ENCODE measurements at regions of chr9 and their contacts with region 1.

Region 1: GRCh38 chr9:26326473-26327044 is 566.0 kb downstream of the CAAP1 start:
- DNase-seq: peak; percentile 81
- ATAC-seq: peak; percentile 81
- H3K4me3 ChIP-seq: no peak overlapping the region
- H3K27ac ChIP-seq: no peak overlapping the region
- H3K4me1 ChIP-seq: peaks cover 2% of the 10 kb centered on the region; the same call in 1 of the 2 replicates
- H3K27me3 ChIP-seq: no peaks in the 10 kb centered on the region
- CTCF ChIP-seq: peak; percentile 89
- POLR2A ChIP-seq: peak; percentile 48; the same call in 1 of the 2 replicates
- RAD21 ChIP-seq: peak; percentile 95

Region 2: GRCh38 chr9:25613704-25614103 is 712.9 kb before region 1 on chr9:
- CTCF ChIA-PET with region 1: no interaction called
- POLR2A ChIA-PET with region 1: no interaction called
- dilution Hi-C with region 1: no loop called
- in situ Hi-C with region 1: no loop called
- intact Hi-C with region 1: no loop called
- DNase-seq: no peak
- ATAC-seq: no peak
- H3K4me3 ChIP-seq: no peak overlapping the region
- H3K27ac ChIP-seq: no peak overlapping the region
- H3K4me1 ChIP-seq: no peaks in the 10 kb centered on the region
- H3K27me3 ChIP-seq: no peaks in the 10 kb centered on the region
- CTCF ChIP-seq: no peak
- POLR2A ChIP-seq: no peak
- RAD21 ChIP-seq: no peak

Region 3: GRCh38 chr9:25954209-25954608 is 372.4 kb before region 1 on chr9:
- CTCF ChIA-PET with region 1: interaction called, 3 read pairs
- POLR2A ChIA-PET with region 1: no interaction called
- dilution Hi-C with region 1: no loop called
- in situ Hi-C with region 1: loop called (anchors 5 kb)
- intact Hi-C with region 1: no loop called
- DNase-seq: no peak
- ATAC-seq: no peak
- H3K4me3 ChIP-seq: no peak overlapping the region
- H3K27ac ChIP-seq: no peak overlapping the region
- H3K4me1 ChIP-seq: no peaks in the 10 kb centered on the region
- H3K27me3 ChIP-seq: no peaks in the 10 kb centered on the region
- CTCF ChIP-seq: no peak
- POLR2A ChIP-seq: no peak
- RAD21 ChIP-seq: no peak

Region 4: DNA sequence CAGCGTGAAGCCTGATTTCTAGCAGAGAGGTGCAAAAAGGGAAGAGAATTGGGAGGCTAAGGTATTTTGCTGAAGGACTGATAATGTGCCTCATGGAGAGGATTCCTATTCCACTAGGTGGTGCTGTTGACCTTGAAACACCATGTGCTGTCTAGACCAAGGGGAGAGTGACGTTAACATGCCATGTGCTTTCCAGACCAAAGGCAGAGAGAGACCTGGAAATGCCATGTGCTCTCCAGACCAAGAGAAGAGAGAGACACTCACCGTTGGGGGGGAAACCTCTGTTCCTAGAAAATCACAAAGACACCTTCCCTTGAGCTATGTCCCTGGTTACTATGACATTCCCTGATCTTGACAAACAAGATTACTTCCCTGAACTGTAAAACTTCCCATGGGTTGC is 362.3 kb before region 1 on chr9:
- CTCF ChIA-PET with region 1: interaction called, 16 read pairs
- POLR2A ChIA-PET with region 1: no interaction called
- dilution Hi-C with region 1: no loop called
- in situ Hi-C with region 1: no loop called
- intact Hi-C with region 1: loop called (anchors 1 kb)
- DNase-seq: peak; percentile 82
- ATAC-seq: peak; percentile 57
- H3K4me3 ChIP-seq: no peak overlapping the region
- H3K27ac ChIP-seq: no peak overlapping the region
- H3K4me1 ChIP-seq: no peaks in the 10 kb centered on the region
- H3K27me3 ChIP-seq: no peaks in the 10 kb centered on the region
- CTCF ChIP-seq: peak; percentile 82
- POLR2A ChIP-seq: no peak
- RAD21 ChIP-seq: peak; percentile 92

Region 5: GRCh38 chr9:26170190-26170589 is 156.4 kb before region 1 on chr9:
- CTCF ChIA-PET with region 1: no interaction called
- POLR2A ChIA-PET with region 1: no interaction called
- dilution Hi-C with region 1: no loop called
- in situ Hi-C with region 1: no loop called
- intact Hi-C with region 1: loop called (anchors 10 kb)
- DNase-seq: no peak
- ATAC-seq: peak; percentile 17; the same call in 1 of the 2 replicates
- H3K4me3 ChIP-seq: no peak overlapping the region
- H3K27ac ChIP-seq: no peak overlapping the region
- H3K4me1 ChIP-seq: peaks cover 1% of the 10 kb centered on the region; the same call in 1 of the 2 replicates
- H3K27me3 ChIP-seq: no peaks in the 10 kb centered on the region
- CTCF ChIP-seq: no peak
- POLR2A ChIP-seq: no peak
- RAD21 ChIP-seq: no peak

Region 6: GRCh38 chr9:26261503-26262330 is 64.8 kb before region 1 on chr9:
- CTCF ChIA-PET with region 1: no interaction called
- POLR2A ChIA-PET with region 1: no interaction called
- dilution Hi-C with region 1: no loop called
- in situ Hi-C with region 1: no loop called
- intact Hi-C with region 1: loop called (anchors 2 kb)
- DNase-seq: peak; percentile 87
- ATAC-seq: peak; percentile 72
- H3K4me3 ChIP-seq: no peak overlapping the region
- H3K27ac ChIP-seq: peak overlapping the region; percentile 99
- H3K4me1 ChIP-seq: peaks cover 18% of the 10 kb centered on the region
- H3K27me3 ChIP-seq: no peaks in the 10 kb centered on the region
- CTCF ChIP-seq: no peak
- POLR2A ChIP-seq: no peak; the same call in 1 of the 2 replicates
- RAD21 ChIP-seq: no peak

Region 7: DNA sequence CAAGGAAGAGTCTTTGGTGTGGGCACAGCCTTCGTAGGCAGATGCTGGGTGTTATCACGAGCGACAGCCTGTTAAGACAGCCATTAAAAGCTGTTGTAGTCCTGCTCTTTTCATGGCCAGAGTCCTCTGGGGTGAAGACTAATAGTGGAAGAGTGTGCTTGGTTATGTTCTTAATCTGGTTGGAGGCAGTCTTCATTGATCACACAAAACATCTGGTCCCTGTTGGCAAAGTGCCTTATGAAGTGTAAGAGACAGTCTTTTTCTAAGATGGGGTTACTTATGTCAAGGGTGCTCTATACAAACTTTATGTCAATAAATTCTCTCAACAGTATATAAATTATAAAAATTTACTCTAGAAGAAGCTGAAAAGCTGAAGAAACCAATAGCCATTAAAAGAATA is 285.7 kb after region 1 on chr9:
- CTCF ChIA-PET with region 1: no interaction called
- POLR2A ChIA-PET with region 1: no interaction called
- dilution Hi-C with region 1: no loop called
- in situ Hi-C with region 1: no loop called
- intact Hi-C with region 1: loop called (anchors 5 kb)
- DNase-seq: no peak
- ATAC-seq: no peak
- H3K4me3 ChIP-seq: no peak overlapping the region
- H3K27ac ChIP-seq: no peak overlapping the region
- H3K4me1 ChIP-seq: no peaks in the 10 kb centered on the region
- H3K27me3 ChIP-seq: no peaks in the 10 kb centered on the region
- CTCF ChIP-seq: no peak
- POLR2A ChIP-seq: no peak
- RAD21 ChIP-seq: no peak

Measured in IMR-90 (cell line).